Sciatic nerve (tissue), 2 donors: ENCODE measurements at regions of chr6 and their contacts with region 1.

Region 1: GRCh38 chr6:93139408-93140081 is 279.8 kb downstream of the EPHA7 start:
- DNase-seq: no peak
- ATAC-seq: no peak

Region 2: GRCh38 chr6:91730710-91731109 is 1408.8 kb before region 1 on chr6:
- intact Hi-C with region 1: no loop called
- DNase-seq: no peak
- ATAC-seq: no peak

Region 3: DNA sequence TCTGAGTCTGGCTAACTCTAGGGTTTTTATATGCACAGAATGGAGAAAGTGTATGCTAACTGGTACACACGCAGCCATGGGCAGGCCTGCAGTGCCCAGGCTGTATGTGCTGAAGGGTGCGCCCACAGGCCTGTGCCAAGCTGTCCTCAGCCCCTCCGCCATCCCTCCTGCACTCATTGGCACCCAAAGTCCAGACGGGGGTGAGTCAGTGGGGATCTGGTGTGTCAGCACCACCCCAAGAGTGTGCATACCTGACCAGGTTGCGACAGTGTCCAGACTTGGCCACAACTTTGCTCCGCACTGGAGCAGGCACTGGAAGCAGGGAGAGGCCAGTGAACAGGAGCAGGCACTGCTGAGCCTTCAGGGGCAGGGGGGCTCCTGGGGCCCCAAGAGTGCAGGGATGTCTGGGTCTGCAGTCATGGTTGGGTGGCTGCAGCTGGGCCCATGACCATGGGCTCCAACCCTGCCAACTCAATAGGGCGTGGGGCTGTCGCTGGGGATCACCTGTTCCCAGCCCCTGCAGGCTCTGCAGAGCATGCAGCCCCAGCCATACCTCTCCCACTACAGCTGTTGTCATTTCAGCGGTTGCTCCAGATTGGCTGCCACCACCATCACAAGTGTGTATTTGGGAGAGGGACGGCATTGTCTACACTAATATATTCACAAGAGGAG is 438.0 kb before region 1 on chr6:
- intact Hi-C with region 1: no loop called
- DNase-seq: peak; percentile 21
- ATAC-seq: peak; percentile 26

Region 4: GRCh38 chr6:93008357-93008756 is 131.2 kb before region 1 on chr6:
- intact Hi-C with region 1: no loop called
- DNase-seq: no peak
- ATAC-seq: no peak

Region 5: DNA sequence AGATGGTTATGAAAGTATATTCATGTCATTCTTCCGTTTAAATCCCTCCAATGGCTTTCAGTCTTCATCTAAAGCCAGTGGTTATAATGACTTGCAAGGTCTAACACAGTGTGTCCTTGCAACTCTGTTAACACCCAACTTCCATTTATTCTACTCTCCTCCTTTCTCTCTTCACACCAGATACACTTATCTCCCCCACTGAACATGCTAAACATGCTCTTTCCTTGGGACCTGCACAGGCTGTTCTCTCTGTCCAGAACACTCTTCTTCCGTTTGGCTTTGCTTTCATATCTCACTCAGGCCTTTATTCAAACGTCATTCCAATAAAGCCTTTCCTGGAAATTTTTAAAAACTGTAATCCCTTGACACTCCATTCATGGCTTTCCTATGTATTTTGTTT is 188.3 kb after region 1 on chr6:
- intact Hi-C with region 1: loop called (anchors 5 kb)
- DNase-seq: no peak
- ATAC-seq: no peak